Heart left ventricle (tissue), 16 donors: ENCODE measurements at regions of chr6 and their contacts with region 1.

Region 1: DNA sequence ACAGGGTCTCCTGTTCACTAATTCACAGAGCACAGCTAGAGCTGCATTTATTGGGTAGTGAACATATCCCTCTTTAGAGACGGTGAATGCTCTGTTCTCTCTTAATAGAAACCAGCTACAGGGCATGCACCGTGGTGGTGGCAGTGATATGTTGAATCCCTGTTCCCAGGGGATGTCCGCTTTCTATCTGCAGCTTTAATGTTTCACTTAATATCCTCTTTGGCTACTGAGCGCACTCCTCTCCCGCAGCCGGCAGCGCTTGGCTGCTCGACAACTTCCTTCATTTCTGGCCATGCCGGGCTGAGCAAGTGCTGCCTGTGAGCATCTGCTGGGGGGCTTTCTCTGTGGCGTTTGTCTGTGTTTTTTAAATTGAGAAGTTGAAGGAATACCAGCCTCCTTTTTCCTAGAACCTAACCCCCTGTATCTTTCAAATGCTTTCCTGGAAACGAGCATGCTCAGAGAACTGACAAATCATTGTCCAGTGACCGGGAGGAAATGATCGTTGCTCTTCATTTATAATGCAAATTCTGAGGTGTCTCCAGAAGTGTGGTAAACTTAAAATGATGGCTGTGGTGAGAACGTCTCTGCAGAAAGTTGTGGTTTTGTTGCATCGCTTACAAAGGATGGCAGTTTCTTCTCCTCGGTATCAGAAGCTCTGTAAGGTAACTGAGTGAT is 297.9 kb downstream of the UTRN start:
- DNase-seq: peak; percentile 15 to 74 (median 36)
- ATAC-seq: peak; percentile 35 to 73 (median 72)
- H3K4me3 ChIP-seq: peak overlapping the region in 6 of 12 donors; percentile 2 to 43 (median 14)
- H3K27ac ChIP-seq: no peak overlapping the region
- H3K4me1 ChIP-seq: peaks cover 0 to 35% (median 21%) of the 10 kb centered on the region in 12 donors
- H3K27me3 ChIP-seq: no peaks in the 10 kb centered on the region
- CTCF ChIP-seq: no peak
- POLR2A ChIP-seq: no peak

Region 2: GRCh38 chr6:144653885-144654505 is 70.9 kb after region 1 on chr6:
- intact Hi-C with region 1: no loop called
- DNase-seq: no peak
- ATAC-seq: no peak
- H3K4me3 ChIP-seq: no peak overlapping the region
- H3K27ac ChIP-seq: peak overlapping the region in 1 of 12 donors; percentile 56
- H3K4me1 ChIP-seq: peaks cover 0 to 32% (median 2%) of the 10 kb centered on the region in 12 donors
- H3K27me3 ChIP-seq: no peaks in the 10 kb centered on the region
- CTCF ChIP-seq: no peak
- POLR2A ChIP-seq: no peak

Region 3: GRCh38 chr6:144931172-144932035 is 348.3 kb after region 1 on chr6:
- intact Hi-C with region 1: loop called in 8 of 10 experiments (anchors 5 to 10 kb)
- DNase-seq: peak in 1 of 5 donors; percentile 8
- ATAC-seq: no peak
- H3K4me3 ChIP-seq: no peak overlapping the region
- H3K27ac ChIP-seq: no peak overlapping the region
- H3K4me1 ChIP-seq: no peaks in the 10 kb centered on the region
- H3K27me3 ChIP-seq: no peaks in the 10 kb centered on the region
- CTCF ChIP-seq: peak in 11 of 12 donors; percentile 30 to 65 (median 47)
- POLR2A ChIP-seq: no peak

Region 4: GRCh38 chr6:145036848-145037567 is 453.9 kb after region 1 on chr6:
- intact Hi-C with region 1: loop called in 1 of 10 experiments (anchors 10 kb)
- DNase-seq: peak in 3 of 5 donors; percentile 14 to 59 (median 28)
- ATAC-seq: peak; percentile 76 to 99 (median 90)
- H3K4me3 ChIP-seq: no peak overlapping the region
- H3K27ac ChIP-seq: no peak overlapping the region
- H3K4me1 ChIP-seq: peaks cover 0 to 11% (median 0%) of the 10 kb centered on the region in 12 donors
- H3K27me3 ChIP-seq: no peaks in the 10 kb centered on the region
- CTCF ChIP-seq: no peak
- POLR2A ChIP-seq: no peak

Region 5: GRCh38 chr6:145214570-145214969 is 631.5 kb after region 1 on chr6:
- intact Hi-C with region 1: loop called (anchors 1 to 10 kb)
- DNase-seq: no peak
- ATAC-seq: no peak
- H3K4me3 ChIP-seq: peak overlapping the region in 1 of 12 donors; percentile 17
- H3K27ac ChIP-seq: no peak overlapping the region
- H3K4me1 ChIP-seq: no peaks in the 10 kb centered on the region
- H3K27me3 ChIP-seq: no peaks in the 10 kb centered on the region
- CTCF ChIP-seq: peak; percentile 40 to 72 (median 59)
- POLR2A ChIP-seq: no peak

Region 6: GRCh38 chr6:145704143-145704781 is 1121.2 kb after region 1 on chr6:
- intact Hi-C with region 1: loop called in 1 of 10 experiments (anchors 10 kb)
- DNase-seq: no peak
- ATAC-seq: no peak
- H3K4me3 ChIP-seq: no peak overlapping the region
- H3K27ac ChIP-seq: no peak overlapping the region
- H3K4me1 ChIP-seq: peaks cover 0 to 11% (median 0%) of the 10 kb centered on the region in 12 donors
- H3K27me3 ChIP-seq: no peaks in the 10 kb centered on the region
- CTCF ChIP-seq: peak; percentile 25 to 70 (median 56)
- POLR2A ChIP-seq: no peak